ENCODE measurements at regions of chr16 and their contacts with region 1.

Region 1: GRCh38 chr16:27455700-27456099 is 53.7 kb downstream of the IL21R start:
- DNase-seq: no peak
- ATAC-seq: peak in 7 of 8 donors; percentile 4 to 79 (median 26)
- H3K4me3 ChIP-seq: no peak overlapping the region
- H3K27ac ChIP-seq: peak overlapping the region in 1 of 10 donors; percentile 40
- H3K4me1 ChIP-seq: peaks cover 1 to 35% (median 25%) of the 10 kb centered on the region in 9 donors
- H3K27me3 ChIP-seq: peaks cover 0 to 11% (median 5%) of the 10 kb centered on the region in 7 donors
- CTCF ChIP-seq: no peak

Region 2: GRCh38 chr16:27154705-27155521 is 300.8 kb before region 1 on chr16:
- intact Hi-C with region 1: loop called in 4 of 10 experiments (anchors 1 to 5 kb)
- DNase-seq: peak; percentile 51 to 71
- ATAC-seq: peak in 5 of 8 donors; percentile 58 to 84 (median 72)
- H3K4me3 ChIP-seq: no peak overlapping the region
- H3K27ac ChIP-seq: no peak overlapping the region
- H3K4me1 ChIP-seq: peaks cover 0 to 6% (median 0%) of the 10 kb centered on the region in 9 donors
- H3K27me3 ChIP-seq: no peaks in the 10 kb centered on the region
- CTCF ChIP-seq: peak; percentile 89 to 99 (median 95)

Region 3: DNA sequence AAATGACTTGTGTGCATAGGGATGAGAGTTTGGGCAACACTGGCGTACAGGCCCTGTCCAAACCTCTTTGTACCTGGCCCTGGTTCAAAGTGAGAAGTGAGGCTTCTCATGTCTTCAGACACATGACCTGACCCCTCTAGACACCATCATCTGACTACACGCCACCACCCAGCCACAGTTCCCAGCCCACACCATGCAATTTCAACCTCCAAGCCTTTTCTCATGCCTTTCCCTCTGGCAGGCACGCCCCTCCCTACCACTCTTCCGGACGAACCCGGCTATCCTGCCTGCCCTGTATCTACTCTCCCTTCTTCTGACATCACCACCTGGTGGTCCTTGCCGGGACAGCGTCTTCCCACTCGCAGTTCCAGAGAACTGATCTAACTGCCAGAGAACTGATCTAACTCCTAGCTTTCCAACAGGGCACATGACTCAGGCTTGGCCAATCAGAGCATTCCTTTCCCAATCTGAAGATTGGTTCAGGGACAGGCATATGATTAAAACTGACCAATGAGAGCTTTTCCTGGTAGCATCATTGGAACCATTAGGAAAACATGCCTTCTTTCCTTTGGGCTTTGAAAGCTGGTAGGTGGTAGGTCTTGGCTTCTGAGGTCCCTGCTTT is 80.8 kb before region 1 on chr16:
- intact Hi-C with region 1: loop called in 4 of 10 experiments (anchors 5 to 10 kb)
- DNase-seq: peak; percentile 59 to 63
- ATAC-seq: peak; percentile 69 to 90 (median 86)
- H3K4me3 ChIP-seq: peak overlapping the region in 2 of 10 donors; percentile 8 to 36
- H3K27ac ChIP-seq: peak overlapping the region in 3 of 10 donors; percentile 0 to 81 (median 0)
- H3K4me1 ChIP-seq: peaks cover 0 to 66% (median 0%) of the 10 kb centered on the region in 9 donors
- H3K27me3 ChIP-seq: no peaks in the 10 kb centered on the region
- CTCF ChIP-seq: peak; percentile 15 to 60 (median 41)